MCF 10A (cell line): ENCODE measurements at regions of chr7 and their contacts with region 1.

Region 1: GRCh38 chr7:24979863-24980533 is at the start of gene OSBPL3:
- DNase-seq: peak; percentile 96
- H3K4me3 Mint-ChIP-seq: peak within 1 kb of the TSS; percentile 82
- H3K27ac Mint-ChIP-seq: peak within 1 kb of the TSS; percentile 52
- H3K4me1 Mint-ChIP-seq: peaks cover 45% of the 10 kb centered on the region
- H3K27me3 Mint-ChIP-seq: no peaks in the 10 kb centered on the region
- CTCF ChIP-seq: peak; percentile 5
- total RNA-seq, gene OSBPL3: 33.8 and 35.7 TPM in 2 replicates

Region 2: DNA sequence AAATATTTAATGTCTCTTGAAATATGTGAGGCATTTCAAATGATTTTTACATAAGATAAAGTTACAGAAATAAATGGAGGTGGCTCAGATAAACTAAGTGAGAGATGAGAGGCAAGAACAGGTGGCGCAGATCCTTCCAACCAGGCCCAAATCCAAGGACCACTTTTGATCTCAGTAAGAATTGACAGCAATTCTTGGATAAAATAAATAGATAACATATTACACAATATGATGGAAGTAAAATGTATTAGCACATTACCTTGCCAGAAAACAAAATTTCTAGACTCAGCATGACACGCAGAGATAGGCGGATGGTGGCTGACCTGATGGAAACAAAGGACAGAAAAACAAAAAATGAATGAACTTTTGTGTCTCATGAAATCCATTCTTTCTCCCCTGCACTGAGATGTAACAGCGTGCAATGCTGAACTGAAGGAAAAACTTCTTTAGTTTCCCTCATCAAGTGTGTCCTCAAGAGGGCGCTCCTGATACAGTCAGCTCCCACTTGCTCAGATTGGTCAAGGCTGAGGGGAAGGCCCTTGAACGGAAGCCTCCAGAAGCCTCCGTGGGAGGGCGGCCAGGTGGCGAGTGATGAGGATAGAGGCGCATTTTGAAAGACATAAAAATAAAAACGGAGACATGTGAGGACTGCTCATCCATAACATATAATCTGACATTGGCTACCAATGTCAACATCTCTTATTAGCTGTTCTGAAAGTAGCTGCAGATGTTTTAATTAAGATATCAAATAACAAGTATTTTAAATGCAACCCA is 159.9 kb before region 1 on chr7:
- CTCF ChIA-PET with region 1: interaction called, 104 read pairs
- POLR2A ChIA-PET with region 1: interaction called, 163 read pairs
- intact Hi-C with region 1: loop called (anchors 1 kb)
- DNase-seq: peak; percentile 93
- H3K4me3 Mint-ChIP-seq: peak overlapping the region; percentile 66
- H3K27ac Mint-ChIP-seq: peak overlapping the region; percentile 99
- H3K4me1 Mint-ChIP-seq: peaks cover 39% of the 10 kb centered on the region
- H3K27me3 Mint-ChIP-seq: no peaks in the 10 kb centered on the region
- CTCF ChIP-seq: peak; percentile 77

Region 3: DNA sequence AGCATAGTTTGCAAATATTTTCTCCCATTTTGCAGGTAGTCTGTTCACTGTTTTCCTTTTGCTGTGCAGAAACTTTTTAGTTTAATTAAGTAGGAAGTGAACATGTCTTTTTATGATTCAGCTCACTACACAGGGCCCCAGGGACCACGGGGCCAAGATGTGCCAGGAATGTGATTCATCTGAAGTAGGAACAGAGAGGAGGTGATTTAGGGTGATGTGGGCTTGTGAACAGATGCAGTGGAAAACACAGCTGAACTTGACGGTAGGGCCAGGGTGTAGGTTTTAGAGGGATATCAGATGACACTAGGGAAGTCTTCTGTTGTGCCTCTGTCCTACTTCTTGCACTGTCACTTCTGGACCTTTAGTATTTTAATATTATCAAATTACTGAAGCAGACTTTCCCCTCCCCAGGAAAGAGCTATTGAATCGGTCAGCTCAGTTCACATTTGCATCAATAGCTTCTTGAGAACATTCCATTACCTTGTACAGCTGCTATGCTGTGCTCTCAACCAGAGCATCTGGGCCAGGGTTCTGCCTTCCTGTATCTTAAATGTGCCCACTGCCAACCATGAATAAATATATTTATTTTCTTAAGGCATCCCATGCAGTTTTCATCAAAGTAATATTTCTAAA is 96.9 kb before region 1 on chr7:
- CTCF ChIA-PET with region 1: interaction called, 25 read pairs
- POLR2A ChIA-PET with region 1: interaction called, 16 read pairs
- intact Hi-C with region 1: no loop called
- DNase-seq: peak; percentile 73
- H3K4me3 Mint-ChIP-seq: no peak overlapping the region
- H3K27ac Mint-ChIP-seq: peak overlapping the region; percentile 3
- H3K4me1 Mint-ChIP-seq: peaks cover 11% of the 10 kb centered on the region
- H3K27me3 Mint-ChIP-seq: no peaks in the 10 kb centered on the region
- CTCF ChIP-seq: no peak

Region 4: DNA sequence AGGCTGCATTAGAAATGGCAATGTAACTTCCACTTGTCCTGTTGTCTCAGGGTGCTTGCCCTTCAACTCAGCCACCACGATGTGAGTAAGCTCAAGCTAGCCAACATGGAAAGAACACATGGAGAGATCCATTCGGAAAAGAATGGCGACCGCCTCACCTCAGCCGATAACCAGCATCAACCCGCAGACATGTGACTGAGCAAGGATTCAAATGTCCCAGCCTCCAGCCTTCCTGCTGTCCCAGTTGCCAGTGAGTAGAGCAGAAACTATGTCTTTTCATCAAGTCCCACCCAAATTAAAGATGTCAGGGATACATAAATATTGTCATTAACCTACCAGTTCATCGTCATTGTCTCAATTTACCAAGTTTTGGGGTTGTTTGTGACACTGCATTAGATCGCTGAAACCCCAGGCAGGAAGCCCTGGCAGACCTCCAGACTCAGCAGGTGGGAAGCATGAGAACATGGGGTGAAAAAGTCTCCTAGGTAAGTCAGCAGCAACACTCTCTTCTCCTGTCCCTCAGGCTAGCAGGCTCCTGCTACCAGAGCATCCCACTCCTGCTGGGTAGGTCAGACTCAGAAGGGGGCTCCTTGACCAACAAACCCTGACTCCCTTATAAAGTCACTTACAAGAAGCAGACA is 67.0 kb before region 1 on chr7:
- CTCF ChIA-PET with region 1: interaction called, 12 read pairs
- POLR2A ChIA-PET with region 1: interaction called, 28 read pairs
- intact Hi-C with region 1: no loop called
- DNase-seq: no peak
- H3K4me3 Mint-ChIP-seq: no peak overlapping the region
- H3K27ac Mint-ChIP-seq: no peak overlapping the region
- H3K4me1 Mint-ChIP-seq: peaks cover 68% of the 10 kb centered on the region
- H3K27me3 Mint-ChIP-seq: no peaks in the 10 kb centered on the region
- CTCF ChIP-seq: no peak

Region 5: GRCh38 chr7:24965831-24966709 is 13.9 kb before region 1 on chr7:
- CTCF ChIA-PET with region 1: interaction called, 39 read pairs
- POLR2A ChIA-PET with region 1: interaction called, 161 read pairs
- intact Hi-C with region 1: no loop called
- DNase-seq: no peak
- H3K4me3 Mint-ChIP-seq: no peak overlapping the region
- H3K27ac Mint-ChIP-seq: peak overlapping the region; percentile 17
- H3K4me1 Mint-ChIP-seq: peaks cover 51% of the 10 kb centered on the region
- H3K27me3 Mint-ChIP-seq: no peaks in the 10 kb centered on the region
- CTCF ChIP-seq: no peak

Region 6: DNA sequence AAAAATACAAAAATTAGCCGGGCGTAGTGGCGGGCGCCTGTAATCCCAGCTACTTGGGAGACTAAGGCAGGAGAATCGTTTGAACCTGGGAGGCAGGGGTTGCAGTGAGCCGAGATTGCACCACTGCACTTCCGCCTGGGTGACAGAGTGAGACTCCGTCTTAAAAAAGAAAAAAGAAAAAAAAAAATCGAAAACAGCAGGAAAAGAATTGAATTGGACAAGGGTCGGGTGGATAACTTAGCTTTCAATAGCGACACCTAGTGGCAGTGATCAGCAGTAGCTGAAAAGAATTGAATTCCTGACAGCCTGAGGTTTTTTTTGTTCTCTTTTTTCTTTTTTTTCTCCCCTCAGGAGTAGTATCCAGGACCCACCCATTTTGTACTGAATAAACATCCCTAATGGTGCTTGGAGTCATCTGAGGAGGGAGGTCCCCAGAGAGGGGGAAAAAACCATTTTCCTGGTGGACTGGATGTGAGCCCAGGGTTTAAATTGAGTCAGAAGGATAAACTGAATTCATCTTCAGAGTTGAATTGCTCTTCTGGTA is 90.0 kb after region 1 on chr7:
- CTCF ChIA-PET with region 1: interaction called, 17 read pairs
- POLR2A ChIA-PET with region 1: interaction called, 16 read pairs
- intact Hi-C with region 1: loop called (anchors 1 kb)
- DNase-seq: peak; percentile 70
- H3K4me3 Mint-ChIP-seq: no peak overlapping the region
- H3K27ac Mint-ChIP-seq: no peak overlapping the region
- H3K4me1 Mint-ChIP-seq: peaks cover 8% of the 10 kb centered on the region
- H3K27me3 Mint-ChIP-seq: no peaks in the 10 kb centered on the region
- CTCF ChIP-seq: peak; percentile 85